ENCODE measurements at regions of chr6 and their contacts with region 1.

Region 1: DNA sequence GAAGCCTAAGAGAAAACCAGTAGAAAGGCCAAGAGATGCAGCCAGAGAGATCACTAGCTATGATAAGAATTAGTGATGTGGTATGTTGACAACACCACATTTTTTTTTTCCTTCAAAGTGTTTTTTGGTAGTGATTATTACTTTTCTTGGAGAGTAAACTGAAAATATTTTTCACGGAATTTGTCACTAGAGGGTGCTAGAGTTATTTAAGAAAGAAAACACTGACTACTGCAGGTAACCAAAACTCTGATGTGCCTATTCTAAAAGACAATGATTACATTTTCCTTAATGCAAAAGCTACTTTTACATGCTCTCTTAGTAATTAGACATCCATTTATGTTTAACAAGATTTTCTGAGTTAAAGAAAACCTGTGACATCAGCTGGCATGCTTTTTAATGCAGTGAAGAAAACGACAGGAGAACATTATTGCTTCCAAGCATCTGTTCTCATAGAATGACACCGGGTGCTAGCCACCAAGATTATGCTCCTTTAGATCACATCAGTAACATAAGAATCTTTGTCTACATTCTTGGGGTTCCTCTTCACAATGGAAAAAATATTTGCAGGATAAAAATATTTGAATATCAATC is 28.8 kb downstream of the RWDD2A start:
- DNase-seq: no peak
- H3K4me3 Mint-ChIP-seq: no peak overlapping the region
- H3K27ac Mint-ChIP-seq: no peak overlapping the region
- H3K4me1 Mint-ChIP-seq: no peaks in the 10 kb centered on the region
- H3K27me3 Mint-ChIP-seq: no peaks in the 10 kb centered on the region

Region 2: GRCh38 chr6:83341765-83342164 is 119.8 kb after region 1 on chr6:
- CTCF ChIA-PET with region 1: no interaction called
- intact Hi-C with region 1: no loop called
- DNase-seq: no peak
- H3K4me3 Mint-ChIP-seq: no peak overlapping the region
- H3K27ac Mint-ChIP-seq: no peak overlapping the region
- H3K4me1 Mint-ChIP-seq: no peaks in the 10 kb centered on the region
- H3K27me3 Mint-ChIP-seq: peaks cover 6% of the 10 kb centered on the region

Region 3: GRCh38 chr6:83430611-83431563 is 208.9 kb after region 1 on chr6 and contains the start of gene ME1:
- CTCF ChIA-PET with region 1: no interaction called
- intact Hi-C with region 1: loop called (anchors 10 kb)
- DNase-seq: peak; percentile 32
- H3K4me3 Mint-ChIP-seq: no peak within 1 kb of the TSS
- H3K27ac Mint-ChIP-seq: no peak within 1 kb of the TSS
- H3K4me1 Mint-ChIP-seq: no peaks in the 10 kb centered on the region
- H3K27me3 Mint-ChIP-seq: peaks cover 30% of the 10 kb centered on the region
- total RNA-seq, gene ME1: not detected

Region 4: DNA sequence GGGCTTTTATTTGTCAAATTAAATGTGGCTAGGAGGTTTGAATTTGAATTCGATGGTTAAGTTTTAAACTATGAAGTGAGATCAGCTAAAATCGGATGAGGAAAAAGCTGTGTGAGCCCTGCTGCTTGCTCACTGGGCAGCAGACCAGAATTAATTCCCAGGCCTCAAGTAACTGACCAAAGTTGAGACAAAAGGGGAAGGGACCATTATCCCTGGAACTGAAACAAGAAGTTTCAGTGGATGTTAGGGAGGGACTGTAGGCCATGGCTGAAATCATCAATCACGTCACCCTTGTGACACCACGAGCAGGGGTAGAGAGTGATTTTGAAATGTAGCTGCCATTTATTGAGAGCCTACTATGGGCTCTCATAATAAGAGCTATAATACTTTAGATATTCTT is 283.4 kb after region 1 on chr6:
- CTCF ChIA-PET with region 1: interaction called, 130 read pairs
- intact Hi-C with region 1: no loop called
- DNase-seq: no peak
- H3K4me3 Mint-ChIP-seq: no peak overlapping the region
- H3K27ac Mint-ChIP-seq: no peak overlapping the region
- H3K4me1 Mint-ChIP-seq: no peaks in the 10 kb centered on the region
- H3K27me3 Mint-ChIP-seq: no peaks in the 10 kb centered on the region

Region 5: DNA sequence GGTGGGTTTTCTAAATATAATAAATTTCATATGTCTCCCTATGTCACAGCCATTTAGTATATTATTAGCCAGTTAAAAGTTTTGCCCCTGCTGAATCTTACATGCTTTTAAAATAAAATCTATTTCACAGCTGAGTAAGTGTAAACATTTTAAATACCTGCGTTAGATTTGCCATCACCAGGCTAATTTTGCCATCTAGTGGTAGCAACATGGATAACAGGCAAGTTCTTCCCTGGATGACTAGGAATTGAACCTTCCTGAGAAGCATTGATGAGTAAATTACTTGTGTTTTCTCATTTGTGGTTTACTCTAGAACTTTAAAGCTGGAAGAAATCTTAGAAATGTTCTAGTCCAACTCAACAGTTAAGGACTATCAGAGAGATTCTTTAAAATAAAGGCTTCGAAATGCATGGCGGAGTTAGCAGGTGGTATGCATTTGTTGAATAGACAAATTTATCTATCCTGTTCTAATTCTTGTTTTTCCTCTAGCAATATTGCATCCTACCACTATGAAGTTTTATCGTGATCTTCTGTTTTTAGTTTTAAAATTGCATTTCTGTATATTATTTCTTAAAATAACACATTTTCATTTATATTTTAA is 293.0 kb after region 1 on chr6:
- CTCF ChIA-PET with region 1: interaction called, 130 read pairs
- intact Hi-C with region 1: loop called (anchors 1 kb)
- DNase-seq: peak; percentile 45
- H3K4me3 Mint-ChIP-seq: no peak overlapping the region
- H3K27ac Mint-ChIP-seq: no peak overlapping the region
- H3K4me1 Mint-ChIP-seq: peaks cover 7% of the 10 kb centered on the region
- H3K27me3 Mint-ChIP-seq: peaks cover 39% of the 10 kb centered on the region

Region 6: DNA sequence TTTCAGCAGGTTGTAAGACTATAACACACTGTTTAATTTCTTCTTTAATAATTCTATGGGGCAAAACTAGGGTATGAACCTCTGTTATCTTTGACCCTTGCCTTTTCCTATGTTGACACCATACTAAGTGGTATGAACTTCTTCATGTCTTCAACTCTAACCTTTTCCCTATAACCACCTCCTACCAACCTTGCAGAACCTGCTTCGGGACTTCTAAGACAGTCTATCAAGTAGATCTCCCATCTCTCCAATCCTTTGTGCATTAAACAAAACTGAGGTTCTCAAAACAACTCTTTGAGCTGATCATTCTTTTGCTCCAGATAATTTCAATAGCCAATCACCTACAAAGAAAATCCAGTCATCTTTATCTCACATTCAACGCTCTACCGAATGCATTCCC is 463.5 kb after region 1 on chr6:
- CTCF ChIA-PET with region 1: no interaction called
- intact Hi-C with region 1: no loop called
- DNase-seq: no peak
- H3K4me3 Mint-ChIP-seq: no peak overlapping the region
- H3K27ac Mint-ChIP-seq: no peak overlapping the region
- H3K4me1 Mint-ChIP-seq: no peaks in the 10 kb centered on the region
- H3K27me3 Mint-ChIP-seq: no peaks in the 10 kb centered on the region

Region 7: DNA sequence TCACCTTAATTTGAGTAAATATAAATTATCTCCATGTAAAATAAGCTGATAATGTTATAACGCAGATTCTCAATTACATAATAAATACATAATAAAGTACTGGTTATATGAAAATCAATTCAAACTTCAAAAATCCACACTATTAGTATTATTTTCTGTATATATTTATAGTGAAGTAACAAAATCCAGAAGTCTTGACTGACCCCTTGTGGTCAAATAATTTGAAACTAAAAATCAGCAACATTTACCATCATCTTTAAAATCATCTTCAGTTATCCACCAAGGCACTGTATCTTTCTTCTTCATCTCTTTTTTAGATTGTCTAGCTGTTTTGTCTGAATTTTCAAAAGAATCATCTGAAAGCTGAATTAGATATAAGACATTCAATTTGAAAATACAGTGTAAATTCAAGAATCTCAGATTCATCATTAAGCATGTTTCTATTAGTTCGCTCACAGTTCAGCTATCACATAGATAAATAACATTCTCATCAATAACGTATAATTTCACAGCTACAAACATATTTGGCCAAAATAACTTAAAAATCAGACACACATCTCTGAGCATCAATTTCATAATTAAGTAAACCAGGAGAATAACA is 998.9 kb after region 1 on chr6:
- CTCF ChIA-PET with region 1: no interaction called
- intact Hi-C with region 1: loop called (anchors 2 kb)
- DNase-seq: no peak
- H3K4me3 Mint-ChIP-seq: no peak overlapping the region
- H3K27ac Mint-ChIP-seq: no peak overlapping the region
- H3K4me1 Mint-ChIP-seq: peaks cover 4% of the 10 kb centered on the region
- H3K27me3 Mint-ChIP-seq: no peaks in the 10 kb centered on the region

Measured in activated naive CD4-positive, alpha-beta T cell treated with anti-CD3 and anti-CD28 coated beads for 36 hours (primary cell).